ENCODE measurements at regions of chrX and their contacts with region 1.

Region 1: GRCh38 chrX:65034668-65035445 is 58.6 kb upstream of the ZC4H2 start:
- DNase-seq: peak; percentile 72 to 74
- H3K4me3 ChIP-seq: peak within 1 kb of the TSS; percentile 15 to 51 (median 43)
- H3K27ac ChIP-seq: peak within 1 kb of the TSS; percentile 60 to 76 (median 64)
- H3K4me1 ChIP-seq: no peaks in the 10 kb centered on the region
- H3K27me3 ChIP-seq: no peaks in the 10 kb centered on the region
- CTCF ChIP-seq: peak in 5 of 6 experiments; percentile 23 to 48 (median 31)
- POLR2A ChIP-seq: peak in 1 of 2 donors; percentile 61

Region 2: GRCh38 chrX:64698317-64698716 is 336.5 kb before region 1 on chrX:
- intact Hi-C with region 1: no loop called
- DNase-seq: no peak
- H3K4me3 ChIP-seq: no peak overlapping the region
- H3K27ac ChIP-seq: no peak overlapping the region
- H3K4me1 ChIP-seq: no peaks in the 10 kb centered on the region
- H3K27me3 ChIP-seq: no peaks in the 10 kb centered on the region
- CTCF ChIP-seq: no peak
- POLR2A ChIP-seq: no peak

Region 3: DNA sequence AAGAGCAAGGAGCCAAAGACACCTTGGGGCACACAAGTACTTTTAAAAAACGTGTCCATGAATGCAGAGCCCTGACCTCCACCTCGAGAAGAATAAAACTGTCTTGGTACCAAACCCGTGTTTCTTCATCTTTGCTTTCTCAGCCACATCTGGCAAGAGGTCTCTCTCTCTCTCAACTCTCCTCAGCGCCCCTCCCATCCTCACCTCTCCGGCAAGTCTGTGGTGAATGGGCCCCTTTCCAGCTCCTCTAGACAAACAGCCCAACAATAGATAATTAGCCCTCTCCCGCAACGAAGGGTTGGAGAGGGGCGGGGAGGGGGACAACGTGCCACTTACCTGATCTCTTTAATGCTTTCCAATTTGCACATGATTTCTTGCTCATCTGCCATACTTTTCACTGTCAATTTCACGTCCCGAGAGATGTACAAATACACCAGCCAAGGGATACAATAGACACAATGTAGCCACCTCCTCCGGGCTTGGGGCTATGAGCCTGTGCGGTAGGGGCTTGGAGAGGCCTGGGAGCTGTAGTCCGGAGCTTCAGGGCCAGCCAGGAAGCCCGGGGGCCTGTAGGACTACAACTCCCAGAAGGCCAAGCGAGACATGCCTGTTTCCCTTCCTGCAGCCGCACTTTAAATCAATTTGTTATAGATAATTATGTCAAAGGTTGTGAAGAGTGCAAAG is 58.7 kb before region 1 on chrX and contains the start of gene ZC4H2:
- intact Hi-C with region 1: loop called (anchors 10 kb)
- DNase-seq: peak; percentile 70 to 72
- H3K4me3 ChIP-seq: peak within 1 kb of the TSS; percentile 9 to 37 (median 31)
- H3K27ac ChIP-seq: peak within 1 kb of the TSS in 1 of 3 donors; percentile 7
- H3K4me1 ChIP-seq: peaks cover 0 to 3% of the 10 kb centered on the region in 2 donors
- H3K27me3 ChIP-seq: no peaks in the 10 kb centered on the region
- CTCF ChIP-seq: no peak
- POLR2A ChIP-seq: peak in 1 of 2 donors; percentile 25
- total RNA-seq, gene ZC4H2: 10.2 to 14.3 (median 11.4) TPM

Measured in thyroid gland (tissue), 4 donors.